GM10248 (cell line): ENCODE measurements at regions of chr14 and their contacts with region 1.

Region 1: GRCh38 chr14:80074905-80075574 is 136.3 kb downstream of the DIO2 start:
- DNase-seq: no peak
- CTCF ChIP-seq: no peak

Region 2: DNA sequence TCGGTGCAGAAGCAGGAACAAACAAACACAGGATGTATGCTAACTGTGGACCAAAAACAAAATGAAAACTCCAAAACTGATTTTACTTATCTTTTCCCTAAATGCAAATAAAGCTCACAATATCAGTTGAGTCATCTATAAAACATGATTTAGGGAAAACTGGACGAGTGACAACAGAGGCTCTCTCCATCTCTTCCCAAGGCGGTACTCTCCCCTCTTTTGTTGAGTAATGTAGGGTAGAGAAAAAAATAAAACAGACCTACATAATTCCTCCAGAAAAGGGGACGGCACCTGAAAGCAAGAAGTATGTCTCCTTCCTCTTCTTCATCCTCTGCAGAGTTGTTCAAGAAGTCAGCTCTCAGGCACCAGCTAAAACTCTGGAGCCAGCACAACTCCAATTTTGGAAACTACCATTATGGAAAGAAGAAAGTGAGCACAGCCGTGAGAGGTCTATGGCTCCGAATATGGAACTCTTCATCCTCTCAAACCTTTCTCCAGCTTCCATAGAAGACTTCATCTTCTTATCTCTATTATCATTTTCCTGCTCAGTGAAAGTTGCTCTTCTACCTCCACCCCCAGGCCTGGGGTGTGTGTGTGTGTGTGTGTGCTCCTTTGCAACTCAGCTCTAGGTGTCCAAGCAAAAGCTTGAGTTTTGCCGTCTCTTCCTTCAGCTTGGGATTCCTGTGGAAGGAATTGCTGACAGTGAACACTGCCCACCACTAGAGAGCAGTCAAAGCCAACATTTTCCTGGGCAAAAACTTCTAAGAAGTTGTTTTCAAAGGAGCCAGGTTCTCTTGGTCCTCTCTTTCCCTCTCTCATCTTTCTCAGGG is 19.2 kb before region 1 on chr14:
- CTCF ChIA-PET with region 1: interaction called, 11 read pairs
- POLR2A ChIA-PET with region 1: no interaction called
- DNase-seq: peak; percentile 6
- CTCF ChIP-seq: peak; percentile 64

Region 3: GRCh38 chr14:80105487-80105994 is 30.5 kb after region 1 on chr14:
- CTCF ChIA-PET with region 1: no interaction called
- POLR2A ChIA-PET with region 1: no interaction called
- DNase-seq: no peak
- CTCF ChIP-seq: no peak